ENCODE measurements at regions of chr1 and their contacts with region 1.

Region 1: GRCh38 chr1:226186124-226187018 is at the start of gene ACBD3:
- DNase-seq: peak; percentile 91
- H3K4me3 Mint-ChIP-seq: peak within 1 kb of the TSS; percentile 93
- H3K27ac Mint-ChIP-seq: peak within 1 kb of the TSS; percentile 93
- H3K4me1 Mint-ChIP-seq: peaks cover 35% of the 10 kb centered on the region
- H3K27me3 Mint-ChIP-seq: no peaks in the 10 kb centered on the region
- CTCF ChIP-seq: no peak
- total RNA-seq, gene ACBD3: 93.9 and 122 TPM in 2 replicates

Region 2: GRCh38 chr1:225908773-225909172 is 277.6 kb before region 1 on chr1:
- CTCF ChIA-PET with region 1: no interaction called
- POLR2A ChIA-PET with region 1: no interaction called
- intact Hi-C with region 1: no loop called
- DNase-seq: no peak
- H3K4me3 Mint-ChIP-seq: no peak overlapping the region
- H3K27ac Mint-ChIP-seq: no peak overlapping the region
- H3K4me1 Mint-ChIP-seq: no peaks in the 10 kb centered on the region
- H3K27me3 Mint-ChIP-seq: no peaks in the 10 kb centered on the region
- CTCF ChIP-seq: no peak

Region 3: DNA sequence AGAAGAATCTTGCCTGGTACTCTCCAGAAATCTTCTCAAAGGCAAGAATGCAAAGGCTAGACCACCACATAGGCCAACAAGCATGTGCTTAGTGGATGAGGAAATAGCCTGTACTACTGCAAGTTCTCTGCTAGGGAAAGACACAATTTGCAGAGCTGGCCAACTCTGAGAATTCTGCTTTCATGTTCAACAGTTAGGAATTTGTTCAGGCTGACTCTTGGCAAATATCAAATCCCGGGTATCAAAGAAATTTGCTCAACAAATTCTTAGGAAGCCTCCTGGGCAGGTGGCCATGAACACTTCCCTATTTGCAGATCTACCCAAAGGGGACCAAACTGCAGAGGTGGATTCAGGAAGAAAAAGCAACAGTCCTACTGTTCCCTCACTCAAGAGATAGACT is 138.9 kb before region 1 on chr1:
- CTCF ChIA-PET with region 1: no interaction called
- POLR2A ChIA-PET with region 1: no interaction called
- intact Hi-C with region 1: no loop called
- DNase-seq: no peak
- H3K4me3 Mint-ChIP-seq: no peak overlapping the region
- H3K27ac Mint-ChIP-seq: no peak overlapping the region
- H3K4me1 Mint-ChIP-seq: peaks cover 10% of the 10 kb centered on the region
- H3K27me3 Mint-ChIP-seq: no peaks in the 10 kb centered on the region
- CTCF ChIP-seq: no peak

Region 4: DNA sequence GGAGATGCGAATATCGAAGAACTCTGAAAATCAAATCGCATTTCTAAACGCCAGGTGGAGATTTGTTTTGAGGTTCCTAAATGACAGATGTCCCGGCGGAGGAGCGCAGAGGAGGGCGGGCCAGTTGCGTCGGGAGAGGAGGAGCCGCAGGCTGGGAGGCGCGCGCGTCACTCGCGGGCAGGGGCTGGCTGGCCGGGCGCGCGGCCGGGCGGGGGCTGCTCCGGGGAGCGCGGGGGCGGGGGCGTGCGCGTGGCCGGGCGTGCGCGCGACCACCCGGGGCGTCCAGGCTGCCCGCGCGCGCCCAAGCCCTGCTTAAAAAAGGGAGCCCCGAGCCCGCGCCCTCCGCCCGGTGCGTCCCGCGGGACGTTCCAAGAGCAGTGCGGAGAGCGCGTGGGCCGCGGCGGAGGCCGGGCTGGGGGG is 76.5 kb before region 1 on chr1:
- CTCF ChIA-PET with region 1: interaction called, 5 read pairs
- POLR2A ChIA-PET with region 1: interaction called, 13 read pairs
- intact Hi-C with region 1: no loop called
- DNase-seq: peak; percentile 96
- H3K4me3 Mint-ChIP-seq: peak overlapping the region; percentile 83
- H3K27ac Mint-ChIP-seq: peak overlapping the region; percentile 88
- H3K4me1 Mint-ChIP-seq: peaks cover 23% of the 10 kb centered on the region
- H3K27me3 Mint-ChIP-seq: no peaks in the 10 kb centered on the region
- CTCF ChIP-seq: peak; percentile 27

Region 5: DNA sequence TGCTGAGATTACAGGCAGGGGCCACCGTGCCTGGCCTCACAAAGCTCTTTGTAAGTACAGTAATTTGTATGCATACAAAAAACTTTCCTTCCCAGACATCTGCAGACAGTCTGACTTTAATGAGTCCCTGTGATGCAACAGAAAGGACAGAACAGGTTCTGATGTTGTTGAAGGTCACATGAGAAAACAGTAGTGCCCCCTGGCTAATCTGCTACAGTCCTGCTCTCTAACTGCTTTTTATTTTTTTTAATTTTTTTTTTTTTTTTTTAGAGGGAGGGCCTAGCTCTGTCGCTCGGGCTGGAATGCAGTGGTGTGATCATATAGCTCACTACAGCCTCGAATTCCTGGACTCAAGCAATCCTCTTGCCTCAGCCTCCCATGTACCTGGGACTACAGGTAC is 36.6 kb before region 1 on chr1:
- CTCF ChIA-PET with region 1: interaction called, 12 read pairs
- POLR2A ChIA-PET with region 1: interaction called, 4 read pairs
- intact Hi-C with region 1: no loop called
- DNase-seq: peak; percentile 34
- H3K4me3 Mint-ChIP-seq: no peak overlapping the region
- H3K27ac Mint-ChIP-seq: no peak overlapping the region
- H3K4me1 Mint-ChIP-seq: no peaks in the 10 kb centered on the region
- H3K27me3 Mint-ChIP-seq: no peaks in the 10 kb centered on the region
- CTCF ChIP-seq: no peak

Region 6: GRCh38 chr1:226201029-226201593 is 14.7 kb after region 1 on chr1:
- CTCF ChIA-PET with region 1: interaction called, 102 read pairs
- POLR2A ChIA-PET with region 1: interaction called, 17 read pairs
- intact Hi-C with region 1: no loop called
- DNase-seq: peak; percentile 54
- H3K4me3 Mint-ChIP-seq: no peak overlapping the region
- H3K27ac Mint-ChIP-seq: no peak overlapping the region
- H3K4me1 Mint-ChIP-seq: no peaks in the 10 kb centered on the region
- H3K27me3 Mint-ChIP-seq: peaks cover 13% of the 10 kb centered on the region
- CTCF ChIP-seq: peak; percentile 39

Region 7: DNA sequence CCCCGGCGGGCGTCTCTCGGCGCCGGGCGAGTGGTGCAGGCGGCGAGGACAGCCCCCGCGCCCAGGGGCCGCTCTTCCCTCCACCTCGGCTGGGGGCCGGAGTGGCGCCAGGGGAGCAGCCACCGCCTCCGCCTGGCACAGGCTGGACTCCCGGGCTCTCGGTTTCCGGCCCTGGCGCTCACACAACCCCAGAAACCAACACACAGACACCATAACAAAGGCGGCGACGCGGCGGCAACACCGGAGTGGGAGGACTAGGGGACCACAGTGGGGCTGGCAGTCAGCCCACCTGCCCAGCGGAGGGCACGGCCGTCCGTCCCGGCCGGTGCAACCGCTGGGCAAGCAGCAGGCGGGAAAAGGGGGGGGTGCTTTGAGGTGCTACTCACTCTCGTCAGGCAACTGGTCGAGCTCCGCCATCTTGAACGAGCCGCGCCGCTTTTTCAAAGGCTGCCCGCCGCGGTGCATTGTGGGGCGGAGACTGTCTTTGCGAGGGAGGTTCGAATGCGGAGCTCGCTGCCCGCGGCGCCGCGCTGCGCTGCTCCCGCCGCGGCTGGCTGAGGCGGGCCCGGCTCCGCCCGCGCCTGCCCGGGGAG is 122.4 kb after region 1 on chr1 and contains the start of gene LIN9:
- CTCF ChIA-PET with region 1: interaction called, 4 read pairs
- POLR2A ChIA-PET with region 1: interaction called, 32 read pairs
- intact Hi-C with region 1: no loop called
- DNase-seq: peak; percentile 98
- H3K4me3 Mint-ChIP-seq: peak within 1 kb of the TSS; percentile 84
- H3K27ac Mint-ChIP-seq: peak within 1 kb of the TSS; percentile 82
- H3K4me1 Mint-ChIP-seq: peaks cover 34% of the 10 kb centered on the region
- H3K27me3 Mint-ChIP-seq: no peaks in the 10 kb centered on the region
- CTCF ChIP-seq: no peak
- total RNA-seq, gene LIN9: 10.3 and 10.4 TPM in 2 replicates